ENCODE measurements at regions of chr19 and their contacts with region 1.

Region 1: GRCh38 chr19:46537136-46538097 is 41.8 kb upstream of the PNMA8B start:
- DNase-seq: peak; percentile 55 to 59
- ATAC-seq: peak; percentile 84 to 89
- H3K4me3 ChIP-seq: no peak overlapping the region
- H3K27ac ChIP-seq: no peak overlapping the region
- H3K4me1 ChIP-seq: no peaks in the 10 kb centered on the region
- CTCF ChIP-seq: peak; percentile 77
- EP300 ChIP-seq: no peak
- POLR2A ChIP-seq: no peak
- RAD21 ChIP-seq: 0 out of 5 replicates have a peak, but pooled peaks of 1 of the 2 experiments have one; percentile 12

Region 2: GRCh38 chr19:46551164-46551563 is 13.7 kb after region 1 on chr19:
- CTCF ChIA-PET with region 1: interaction called, 1,052 read pairs
- POLR2A ChIA-PET with region 1: no interaction called
- DNase-seq: no peak
- ATAC-seq: no peak
- H3K4me3 ChIP-seq: no peak overlapping the region
- H3K27ac ChIP-seq: no peak overlapping the region
- H3K4me1 ChIP-seq: no peaks in the 10 kb centered on the region
- CTCF ChIP-seq: no peak
- EP300 ChIP-seq: no peak
- POLR2A ChIP-seq: no peak
- RAD21 ChIP-seq: no peak

Region 3: GRCh38 chr19:46571531-46571930 is 34.1 kb after region 1 on chr19:
- CTCF ChIA-PET with region 1: interaction called, 10 read pairs
- POLR2A ChIA-PET with region 1: no interaction called
- DNase-seq: peak; percentile 75 to 79
- ATAC-seq: peak; percentile 92 to 95
- H3K4me3 ChIP-seq: no peak overlapping the region
- H3K27ac ChIP-seq: no peak overlapping the region
- H3K4me1 ChIP-seq: no peaks in the 10 kb centered on the region
- CTCF ChIP-seq: 0 out of 3 replicates have a peak, but pooled peaks have one; percentile 7
- EP300 ChIP-seq: no peak
- POLR2A ChIP-seq: no peak
- RAD21 ChIP-seq: no peak; a peak in 1 of 5 replicates